CD4-positive, alpha-beta memory T cell (primary cell): ENCODE measurements at regions of chr11 and their contacts with region 1.

Region 1: DNA sequence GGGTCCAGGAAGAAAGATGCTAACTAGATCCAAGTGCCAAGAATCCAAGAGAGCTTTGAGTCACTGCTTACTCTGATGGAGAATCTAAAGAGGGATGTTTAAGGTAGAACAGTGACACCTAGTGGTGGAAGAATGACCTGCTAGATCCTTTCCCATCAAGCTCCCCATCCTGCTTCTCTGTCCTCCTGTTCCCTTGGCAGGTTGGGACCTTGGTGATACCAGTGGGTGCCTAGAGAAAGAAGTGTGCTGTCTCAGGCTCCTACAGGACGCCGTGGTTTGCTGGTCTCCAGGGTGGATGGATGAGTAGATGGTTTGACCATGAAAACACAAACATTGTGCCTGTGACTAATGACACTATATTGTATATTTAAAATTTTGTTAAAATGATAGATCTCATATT is 383.7 kb downstream of the TMEM135 start:
- DNase-seq: peak in 4 of 5 donors; percentile 21 to 38 (median 34)
- H3K4me3 ChIP-seq: no peak overlapping the region
- H3K4me3 Mint-ChIP-seq: no peak overlapping the region
- H3K27ac ChIP-seq: no peak overlapping the region
- H3K27ac Mint-ChIP-seq: no peak overlapping the region
- H3K4me1 ChIP-seq: no peaks in the 10 kb centered on the region
- H3K4me1 Mint-ChIP-seq: no peaks in the 10 kb centered on the region
- H3K27me3 ChIP-seq: no peaks in the 10 kb centered on the region
- H3K27me3 Mint-ChIP-seq: peaks cover 0 to 4% of the 10 kb centered on the region in 2 donors

Region 2: DNA sequence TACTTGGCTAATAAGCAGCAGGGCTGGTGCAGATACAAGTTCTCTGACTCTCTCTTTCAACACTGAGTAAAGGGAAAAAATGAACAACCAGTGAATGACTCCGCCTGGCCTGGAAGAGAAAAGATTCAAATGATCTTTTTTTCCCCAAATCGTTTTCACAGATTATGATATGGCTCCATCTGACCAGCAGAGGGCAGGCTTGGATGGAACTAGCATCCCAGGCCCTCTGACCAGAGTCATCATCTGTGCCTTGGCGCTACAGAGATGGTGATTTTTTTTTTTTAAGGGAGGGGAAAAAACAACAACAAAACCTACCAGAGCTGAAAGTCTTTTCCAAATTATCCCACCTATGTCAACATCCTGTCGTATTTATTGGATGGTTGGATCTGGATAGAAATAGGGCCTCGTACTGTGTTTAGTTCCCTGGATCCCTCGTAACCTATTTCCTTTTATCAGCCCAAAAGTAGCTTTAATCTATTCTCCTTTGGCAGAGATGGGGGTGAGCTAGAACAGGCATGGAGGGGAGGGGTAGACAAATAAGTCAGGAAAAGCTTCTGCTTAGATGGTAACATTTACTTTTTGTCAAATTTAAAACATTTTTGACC is 551.4 kb before region 1 on chr11:
- CTCF ChIA-PET with region 1: interaction called, 3 read pairs
- POLR2A ChIA-PET with region 1: no interaction called
- intact Hi-C with region 1: loop called (anchors 2 kb)
- DNase-seq: peak in 4 of 5 donors; percentile 6 to 12 (median 10)
- H3K4me3 ChIP-seq: no peak overlapping the region
- H3K4me3 Mint-ChIP-seq: no peak overlapping the region
- H3K27ac ChIP-seq: no peak overlapping the region
- H3K27ac Mint-ChIP-seq: no peak overlapping the region
- H3K4me1 ChIP-seq: no peaks in the 10 kb centered on the region
- H3K4me1 Mint-ChIP-seq: no peaks in the 10 kb centered on the region
- H3K27me3 ChIP-seq: no peaks in the 10 kb centered on the region
- H3K27me3 Mint-ChIP-seq: peaks cover 1 to 2% of the 10 kb centered on the region in 2 donors

Region 3: DNA sequence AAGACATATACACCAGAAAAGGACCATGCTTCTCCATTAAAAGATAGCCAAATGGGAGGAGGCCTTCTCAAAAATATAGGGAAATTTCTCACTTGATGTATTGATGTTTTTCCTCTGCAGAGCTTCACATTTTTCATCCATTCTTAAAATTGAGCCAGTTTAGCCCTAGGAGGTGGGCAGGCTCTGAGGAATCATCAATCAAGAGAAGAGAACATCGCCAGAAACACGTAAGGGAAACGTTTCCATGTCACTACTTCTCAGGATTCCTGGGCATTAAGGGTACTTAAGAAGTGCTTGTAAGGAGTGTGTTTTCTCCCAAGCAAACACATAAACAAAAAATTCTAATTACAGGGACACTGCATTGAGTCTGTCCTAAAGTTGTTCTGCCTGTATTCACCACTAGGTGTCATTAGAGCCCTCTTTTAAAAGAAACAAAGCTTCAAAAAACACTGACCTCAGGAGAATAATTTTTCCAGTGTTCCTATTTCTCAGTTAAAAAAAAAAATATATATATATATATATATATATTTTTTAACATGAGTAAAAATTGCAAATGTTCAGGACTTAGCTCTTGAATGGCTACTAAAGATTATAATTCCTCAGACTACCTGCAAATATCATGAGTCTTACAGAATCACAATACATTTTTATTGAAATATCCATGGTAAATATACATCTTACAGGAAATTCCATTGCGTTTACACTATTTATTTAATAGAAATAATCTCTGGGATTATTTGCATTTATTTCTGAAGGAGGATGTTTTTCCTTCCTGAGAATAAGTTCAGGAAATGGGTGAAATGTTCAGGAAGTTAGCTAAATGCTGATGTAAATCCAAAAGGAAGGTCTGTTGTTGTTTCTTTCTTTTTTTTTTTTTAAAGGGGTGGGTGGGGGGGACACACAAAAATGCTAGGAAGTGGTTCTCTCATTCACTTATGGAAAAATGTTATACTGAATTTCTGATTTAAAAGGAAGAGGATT is 482.2 kb before region 1 on chr11:
- CTCF ChIA-PET with region 1: interaction called, 53 read pairs
- POLR2A ChIA-PET with region 1: no interaction called
- intact Hi-C with region 1: no loop called
- DNase-seq: peak in 4 of 5 donors; percentile 26 to 34 (median 32)
- H3K4me3 ChIP-seq: no peak overlapping the region
- H3K4me3 Mint-ChIP-seq: no peak overlapping the region
- H3K27ac ChIP-seq: no peak overlapping the region
- H3K27ac Mint-ChIP-seq: no peak overlapping the region
- H3K4me1 ChIP-seq: no peaks in the 10 kb centered on the region
- H3K4me1 Mint-ChIP-seq: no peaks in the 10 kb centered on the region
- H3K27me3 ChIP-seq: no peaks in the 10 kb centered on the region
- H3K27me3 Mint-ChIP-seq: peaks cover 3 to 5% of the 10 kb centered on the region in 2 donors

Region 4: DNA sequence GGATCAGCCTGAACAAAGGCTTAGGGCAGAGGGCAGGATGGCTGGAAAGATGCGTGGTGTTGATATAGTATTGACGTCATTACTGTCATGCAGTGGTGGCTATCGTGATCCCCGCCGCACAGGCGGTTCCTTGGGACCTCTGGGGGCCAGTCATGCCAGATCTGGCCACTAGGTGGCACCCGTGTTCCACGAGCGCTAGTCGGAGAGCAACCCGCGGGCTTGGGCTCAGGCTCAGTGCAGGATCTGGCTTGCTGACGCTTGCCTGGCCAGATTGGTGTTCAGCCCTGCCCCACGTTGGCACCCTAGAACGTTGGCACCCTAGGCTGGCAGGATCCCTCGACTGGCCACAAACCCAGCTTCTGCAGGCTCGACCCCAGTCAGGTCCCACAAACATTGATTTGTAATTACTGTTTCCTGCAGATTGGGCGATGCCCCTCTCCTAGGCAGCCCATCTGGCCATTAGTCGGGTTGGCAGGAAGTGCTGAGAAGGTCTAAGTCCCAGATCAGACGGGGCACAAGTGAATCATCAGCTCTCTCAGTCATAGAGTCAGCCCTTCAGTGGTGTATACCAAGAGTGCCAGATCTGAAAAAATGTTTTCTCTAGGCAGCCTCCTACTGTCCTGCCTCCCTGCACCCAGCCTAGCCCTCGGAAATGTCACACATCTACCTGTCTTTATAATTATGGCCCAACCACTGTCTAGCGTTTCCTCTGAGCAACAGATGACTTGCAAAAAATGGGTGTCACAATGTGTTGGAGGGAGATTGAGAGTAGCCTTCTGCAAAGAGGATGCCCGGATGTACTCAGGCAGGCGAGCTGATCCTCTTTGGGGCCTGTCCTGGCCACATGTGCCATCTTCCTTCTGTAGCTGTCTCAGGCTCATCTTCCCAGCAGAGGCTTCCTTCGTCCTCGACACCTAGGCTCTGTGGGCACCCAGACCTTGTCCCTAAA is 68.4 kb before region 1 on chr11:
- CTCF ChIA-PET with region 1: interaction called, 85 read pairs
- POLR2A ChIA-PET with region 1: no interaction called
- intact Hi-C with region 1: loop called (anchors 1 kb)
- DNase-seq: peak; percentile 51 to 71 (median 67)
- H3K4me3 ChIP-seq: no peak overlapping the region
- H3K4me3 Mint-ChIP-seq: peak overlapping the region in 2 of 8 donors; percentile 23 to 24
- H3K27ac ChIP-seq: no peak overlapping the region
- H3K27ac Mint-ChIP-seq: peak overlapping the region in 1 of 7 donors; percentile 19
- H3K4me1 ChIP-seq: peaks cover 9% of the 10 kb centered on the region
- H3K4me1 Mint-ChIP-seq: peaks cover 7 to 14% (median 11%) of the 10 kb centered on the region in 4 donors
- H3K27me3 ChIP-seq: no peaks in the 10 kb centered on the region
- H3K27me3 Mint-ChIP-seq: peaks cover 4 to 6% of the 10 kb centered on the region in 2 donors

Region 5: GRCh38 chr11:87398931-87399330 is 22.5 kb before region 1 on chr11:
- CTCF ChIA-PET with region 1: interaction called, 17 read pairs
- POLR2A ChIA-PET with region 1: no interaction called
- intact Hi-C with region 1: no loop called
- DNase-seq: no peak
- H3K4me3 ChIP-seq: no peak overlapping the region
- H3K4me3 Mint-ChIP-seq: no peak overlapping the region
- H3K27ac ChIP-seq: no peak overlapping the region
- H3K27ac Mint-ChIP-seq: no peak overlapping the region
- H3K4me1 ChIP-seq: no peaks in the 10 kb centered on the region
- H3K4me1 Mint-ChIP-seq: no peaks in the 10 kb centered on the region
- H3K27me3 ChIP-seq: no peaks in the 10 kb centered on the region
- H3K27me3 Mint-ChIP-seq: peaks cover 1 to 5% of the 10 kb centered on the region in 2 donors

Region 6: DNA sequence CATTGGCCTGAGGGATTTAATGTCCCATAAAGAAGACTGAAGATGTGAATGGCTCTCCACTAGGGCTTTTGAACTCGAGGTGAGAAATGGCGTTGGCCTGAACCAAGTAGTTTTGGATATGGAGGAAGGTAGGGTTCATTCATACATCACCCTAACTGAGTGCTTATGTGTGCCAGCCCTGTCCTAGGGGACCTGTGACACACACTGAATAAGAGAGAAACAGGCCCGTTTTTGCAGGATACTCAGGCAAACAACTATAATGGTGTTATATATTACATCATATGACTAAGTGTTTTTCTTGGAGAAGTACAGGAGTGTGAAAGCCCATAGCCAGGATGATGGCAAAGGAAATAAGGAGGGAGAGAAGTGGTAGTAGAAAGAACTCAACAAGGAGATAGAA is 15.6 kb before region 1 on chr11:
- CTCF ChIA-PET with region 1: interaction called, 21 read pairs
- POLR2A ChIA-PET with region 1: no interaction called
- intact Hi-C with region 1: no loop called
- DNase-seq: no peak
- H3K4me3 ChIP-seq: no peak overlapping the region
- H3K4me3 Mint-ChIP-seq: no peak overlapping the region
- H3K27ac ChIP-seq: no peak overlapping the region
- H3K27ac Mint-ChIP-seq: no peak overlapping the region
- H3K4me1 ChIP-seq: no peaks in the 10 kb centered on the region
- H3K4me1 Mint-ChIP-seq: no peaks in the 10 kb centered on the region
- H3K27me3 ChIP-seq: no peaks in the 10 kb centered on the region
- H3K27me3 Mint-ChIP-seq: peaks cover 4 to 7% of the 10 kb centered on the region in 2 donors

Region 7: DNA sequence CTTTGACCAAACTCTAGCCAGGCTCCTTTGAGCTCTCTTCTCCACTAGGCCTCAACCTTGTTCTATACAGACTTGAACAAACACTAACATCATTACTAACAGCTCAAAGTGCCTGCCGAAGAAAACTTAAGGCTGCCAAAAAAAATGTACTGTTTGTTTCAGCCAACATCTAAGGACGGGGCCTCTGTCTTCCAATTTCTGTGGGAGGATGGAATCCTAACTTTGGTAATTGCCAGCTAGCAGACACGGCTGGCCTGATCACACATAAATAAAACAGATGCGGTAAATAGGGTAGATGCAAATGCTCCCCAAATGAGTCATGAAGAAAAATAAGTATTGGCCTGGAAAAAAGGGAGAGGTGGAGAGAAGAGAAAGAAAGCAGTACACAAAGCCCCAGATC is 10.6 kb after region 1 on chr11:
- CTCF ChIA-PET with region 1: interaction called, 36 read pairs
- POLR2A ChIA-PET with region 1: no interaction called
- intact Hi-C with region 1: no loop called
- DNase-seq: no peak
- H3K4me3 ChIP-seq: no peak overlapping the region
- H3K4me3 Mint-ChIP-seq: no peak overlapping the region
- H3K27ac ChIP-seq: no peak overlapping the region
- H3K27ac Mint-ChIP-seq: no peak overlapping the region
- H3K4me1 ChIP-seq: no peaks in the 10 kb centered on the region
- H3K4me1 Mint-ChIP-seq: no peaks in the 10 kb centered on the region
- H3K27me3 ChIP-seq: no peaks in the 10 kb centered on the region
- H3K27me3 Mint-ChIP-seq: no peaks in the 10 kb centered on the region